ENCODE measurements at regions of chr9 and their contacts with region 1.

Region 1: GRCh38 chr9:13279284-13280141 is at the start of gene MPDZ:
- DNase-seq: no peak
- ATAC-seq: no peak
- H3K4me3 ChIP-seq: no peak within 1 kb of the TSS
- H3K4me3 Mint-ChIP-seq: no peak within 1 kb of the TSS
- H3K27ac ChIP-seq: no peak within 1 kb of the TSS
- H3K27ac Mint-ChIP-seq: no peak within 1 kb of the TSS
- H3K4me1 ChIP-seq: no peaks in the 10 kb centered on the region
- H3K4me1 Mint-ChIP-seq: no peaks in the 10 kb centered on the region
- H3K27me3 ChIP-seq: no peaks in the 10 kb centered on the region
- H3K27me3 Mint-ChIP-seq: peaks cover 16% of the 10 kb centered on the region
- CTCF ChIP-seq: no peak
- total RNA-seq, gene MPDZ: not detected

Region 2: DNA sequence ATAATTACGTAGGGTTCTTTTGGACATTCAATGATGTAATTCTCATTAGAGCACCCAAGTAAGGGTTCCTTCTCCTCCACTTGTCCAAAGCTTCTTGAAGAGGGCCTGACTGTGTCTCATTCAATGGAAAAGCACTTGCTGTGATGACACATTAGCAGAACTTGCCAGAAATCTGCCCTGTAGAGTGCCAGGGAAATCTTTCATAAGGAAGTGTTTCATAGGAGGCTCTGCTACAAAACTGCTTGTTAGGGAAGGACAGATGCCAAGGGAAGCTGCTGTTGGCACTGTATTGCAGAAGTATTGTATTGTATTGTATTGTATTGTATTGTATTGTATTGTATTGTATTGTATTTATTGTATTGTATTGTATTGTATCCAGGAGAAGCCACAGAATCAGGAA is 45.5 kb after region 1 on chr9:
- CTCF ChIA-PET with region 1: no interaction called
- POLR2A ChIA-PET with region 1: no interaction called
- intact Hi-C with region 1: loop called in 1 of 2 experiments (anchors 5 kb)
- DNase-seq: no peak
- ATAC-seq: no peak
- H3K4me3 ChIP-seq: no peak overlapping the region
- H3K4me3 Mint-ChIP-seq: no peak overlapping the region
- H3K27ac ChIP-seq: no peak overlapping the region
- H3K27ac Mint-ChIP-seq: no peak overlapping the region
- H3K4me1 ChIP-seq: no peaks in the 10 kb centered on the region
- H3K4me1 Mint-ChIP-seq: no peaks in the 10 kb centered on the region
- H3K27me3 ChIP-seq: no peaks in the 10 kb centered on the region
- H3K27me3 Mint-ChIP-seq: no peaks in the 10 kb centered on the region
- CTCF ChIP-seq: no peak

Measured in CD8-positive, alpha-beta T cell (primary cell).